K562 (cell line): ENCODE measurements at regions of chrX and their contacts with region 1.

Region 1: DNA sequence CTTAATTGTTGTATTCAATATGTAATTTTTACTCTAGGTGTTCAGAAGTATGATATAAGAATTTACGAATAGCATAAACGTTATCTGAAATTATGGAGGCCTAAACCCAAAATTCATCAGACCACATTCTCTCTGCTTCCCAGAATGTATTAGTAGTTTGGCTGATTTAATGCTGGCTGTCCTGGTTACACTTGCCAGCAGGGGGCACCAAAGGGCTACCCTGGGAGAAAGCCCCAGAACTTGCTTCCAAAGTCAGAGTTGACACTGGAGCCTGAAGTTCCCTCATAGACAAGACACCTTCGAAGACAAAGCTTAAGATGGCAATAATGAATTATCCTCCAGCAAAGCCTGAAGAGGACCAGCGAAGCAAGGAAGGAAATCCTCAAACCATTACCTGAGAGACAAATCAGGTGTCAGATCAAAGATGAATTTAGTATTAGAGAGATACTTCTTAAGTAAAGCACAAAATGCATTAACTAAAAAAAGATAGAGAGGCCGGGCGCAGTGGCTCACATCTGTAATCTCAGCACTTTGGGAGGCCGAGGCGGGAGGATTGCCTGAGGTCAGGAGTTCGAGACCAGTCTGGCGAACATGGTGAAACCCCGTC is 11.3 kb upstream of the ANOS1 start:
- DNase-seq: peak; percentile 40 to 62 (median 58)
- ATAC-seq: peak; percentile 75
- H3K4me3 ChIP-seq: no peak overlapping the region
- H3K27ac ChIP-seq: no peak overlapping the region
- H3K4me1 ChIP-seq: no peaks in the 10 kb centered on the region
- H3K27me3 ChIP-seq: no peaks in the 10 kb centered on the region
- CTCF ChIP-seq: peak; percentile 64 to 72 (median 70)
- EP300 ChIP-seq: no peak
- POLR2A ChIP-seq: no peak
- RAD21 ChIP-seq: peak; percentile 33 to 59; a peak in 3 of 4 replicates

Region 2: DNA sequence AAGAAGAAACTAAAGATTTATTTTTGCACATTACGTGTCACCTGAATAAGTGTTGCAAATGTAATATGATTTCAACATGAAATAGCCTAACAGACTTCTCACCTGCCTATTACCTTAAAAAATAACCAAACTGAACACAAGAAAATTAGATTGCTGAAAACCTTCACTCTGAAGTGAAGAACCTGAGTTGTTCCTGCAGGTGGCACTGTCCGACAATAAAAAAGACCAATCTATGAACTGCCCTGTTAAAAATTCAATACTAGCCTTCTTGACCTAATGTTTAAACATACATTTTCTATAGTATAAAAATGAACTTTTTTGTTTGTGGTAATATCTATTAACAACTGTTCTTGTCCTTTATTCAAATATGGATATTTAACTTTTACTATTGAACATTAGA is 746.8 kb before region 1 on chrX:
- CTCF ChIA-PET with region 1: interaction called, 3 read pairs
- POLR2A ChIA-PET with region 1: no interaction called
- in situ Hi-C with region 1: loop called (anchors 10 kb)
- intact Hi-C with region 1: loop called (anchors 1 kb)
- DNase-seq: peak; percentile 8 to 43 (median 12)
- ATAC-seq: peak; percentile 76
- H3K4me3 ChIP-seq: no peak overlapping the region
- H3K27ac ChIP-seq: no peak overlapping the region
- H3K4me1 ChIP-seq: no peaks in the 10 kb centered on the region
- H3K27me3 ChIP-seq: no peaks in the 10 kb centered on the region
- CTCF ChIP-seq: peak; percentile 27 to 64 (median 40); a peak in 3 of 6 replicates
- EP300 ChIP-seq: no peak
- POLR2A ChIP-seq: no peak
- RAD21 ChIP-seq: peak; percentile 55 to 60

Region 3: DNA sequence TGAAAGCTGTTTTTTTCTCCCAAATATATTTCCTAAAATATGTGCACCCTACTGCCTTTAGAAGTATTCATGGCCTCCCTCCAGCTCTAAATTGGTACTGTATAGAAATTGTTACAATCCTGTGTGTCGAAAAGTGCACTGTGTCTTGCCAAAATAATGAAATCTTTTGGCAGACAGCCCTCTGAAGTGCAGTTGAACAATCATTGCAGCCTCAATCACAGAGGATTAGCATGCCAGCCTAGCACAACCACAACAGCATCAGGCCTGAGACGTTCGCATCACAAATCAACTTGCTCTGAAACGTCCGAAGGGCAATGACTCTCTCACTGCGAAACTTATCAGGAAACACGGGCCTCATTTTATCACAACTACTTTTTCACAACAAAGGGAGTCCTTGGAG is 110.3 kb before region 1 on chrX:
- CTCF ChIA-PET with region 1: no interaction called
- POLR2A ChIA-PET with region 1: no interaction called
- in situ Hi-C with region 1: no loop called
- intact Hi-C with region 1: no loop called
- DNase-seq: no peak
- ATAC-seq: no peak
- H3K4me3 ChIP-seq: no peak overlapping the region
- H3K27ac ChIP-seq: no peak overlapping the region
- H3K4me1 ChIP-seq: no peaks in the 10 kb centered on the region
- H3K27me3 ChIP-seq: no peaks in the 10 kb centered on the region
- CTCF ChIP-seq: no peak
- EP300 ChIP-seq: no peak
- POLR2A ChIP-seq: no peak
- RAD21 ChIP-seq: no peak

Region 4: DNA sequence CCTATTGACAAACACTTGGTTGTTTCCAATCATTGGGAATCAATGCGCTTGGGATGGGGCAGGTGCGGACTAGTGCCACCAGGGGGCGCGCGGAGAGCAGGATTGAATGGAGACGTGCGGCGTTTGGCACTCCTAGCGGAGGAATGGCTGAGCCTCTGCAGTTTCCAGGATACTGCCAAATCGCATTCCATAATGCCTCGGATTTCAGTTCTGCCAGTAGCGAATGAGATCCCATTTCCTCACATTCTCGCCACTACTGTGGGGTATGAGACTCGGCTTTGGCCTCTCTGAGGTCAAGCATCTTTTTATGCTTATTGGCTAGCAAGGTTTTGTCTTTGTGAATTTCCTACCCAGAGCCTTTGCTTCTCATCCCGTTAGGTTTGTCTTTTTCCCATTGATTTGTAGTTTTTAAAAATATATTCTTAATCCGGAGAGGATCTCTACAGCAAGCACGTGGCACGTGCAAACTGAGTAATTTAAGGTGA is 1252.7 kb after region 1 on chrX:
- CTCF ChIA-PET with region 1: no interaction called
- POLR2A ChIA-PET with region 1: no interaction called
- in situ Hi-C with region 1: no loop called
- intact Hi-C with region 1: loop called (anchors 10 kb)
- DNase-seq: peak; percentile 64 to 75 (median 70)
- ATAC-seq: peak; percentile 90
- H3K4me3 ChIP-seq: no peak overlapping the region
- H3K27ac ChIP-seq: no peak overlapping the region
- H3K4me1 ChIP-seq: no peaks in the 10 kb centered on the region
- H3K27me3 ChIP-seq: peaks cover 0 to 14% of the 10 kb centered on the region in 2 experiments; a peak in 2 of 5 replicates
- CTCF ChIP-seq: peak; percentile 87 to 100 (median 95)
- EP300 ChIP-seq: no peak
- POLR2A ChIP-seq: no peak
- RAD21 ChIP-seq: peak; percentile 83